ENCODE measurements at regions of chr3 and their contacts with region 1.

Region 1: GRCh38 chr3:36729204-36730056 is 34.9 kb downstream of the DCLK3 start:
- DNase-seq: peak in 1 of 2 experiments; percentile 44
- H3K4me3 ChIP-seq: no peak overlapping the region
- H3K27ac ChIP-seq: no peak overlapping the region
- H3K4me1 ChIP-seq: no peaks in the 10 kb centered on the region
- H3K27me3 ChIP-seq: 0 out of 2 replicates have a peak, but pooled peaks cover 4% of the 10 kb centered on the region
- CTCF ChIP-seq: peak; percentile 78

Region 2: DNA sequence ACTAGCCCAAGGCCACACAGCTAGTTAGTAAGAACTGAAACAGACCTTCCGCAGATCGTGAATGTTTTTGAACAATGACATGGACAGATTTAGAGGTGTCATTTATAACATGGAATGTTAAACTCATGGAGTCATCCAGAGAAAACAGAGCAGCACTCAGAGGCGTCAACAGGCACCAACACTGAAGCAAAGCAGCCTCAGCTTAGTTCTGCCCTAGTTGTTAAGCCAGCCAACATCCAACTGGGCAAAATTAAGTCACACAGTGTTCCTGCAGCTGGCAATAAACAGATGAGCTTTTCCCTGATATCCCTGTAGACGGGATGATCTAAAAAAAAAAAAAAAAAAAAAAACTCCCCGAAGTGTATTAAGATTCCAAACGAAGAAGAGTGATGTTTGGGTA is 21.3 kb after region 1 on chr3:
- CTCF ChIA-PET with region 1: no interaction called
- POLR2A ChIA-PET with region 1: interaction called, 10 read pairs
- intact Hi-C with region 1: no loop called
- DNase-seq: no peak
- H3K4me3 ChIP-seq: no peak overlapping the region
- H3K27ac ChIP-seq: no peak overlapping the region
- H3K4me1 ChIP-seq: no peaks in the 10 kb centered on the region
- H3K27me3 ChIP-seq: no peaks in the 10 kb centered on the region; the same call in 1 of the 2 replicates
- CTCF ChIP-seq: no peak

Region 3: DNA sequence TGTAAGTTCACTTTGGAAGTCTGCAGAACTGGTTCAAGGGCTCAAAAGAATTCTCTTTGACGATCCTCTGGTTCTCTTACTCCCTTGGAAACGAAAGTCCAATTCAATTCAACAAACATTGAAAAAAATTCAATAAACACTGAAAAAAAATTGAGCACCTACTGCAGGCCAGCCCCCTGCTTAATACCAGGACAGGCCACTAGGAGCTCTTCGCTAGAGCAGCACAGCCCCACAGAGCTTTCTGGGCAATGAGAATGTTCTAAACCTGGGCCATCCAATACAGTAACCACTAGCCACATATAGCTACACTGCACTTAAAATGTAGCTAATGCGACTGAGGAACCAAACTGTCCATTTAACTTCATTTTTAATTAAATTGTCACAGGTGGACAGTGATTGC is 85.3 kb after region 1 on chr3:
- CTCF ChIA-PET with region 1: no interaction called
- POLR2A ChIA-PET with region 1: no interaction called
- intact Hi-C with region 1: no loop called
- DNase-seq: no peak
- H3K4me3 ChIP-seq: no peak overlapping the region
- H3K27ac ChIP-seq: no peak overlapping the region
- H3K4me1 ChIP-seq: peaks cover 21% of the 10 kb centered on the region; the same call in 1 of the 2 replicates
- H3K27me3 ChIP-seq: no peaks in the 10 kb centered on the region
- CTCF ChIP-seq: peak; percentile 35; the same call in 1 of the 2 replicates

Region 4: GRCh38 chr3:36868614-36869436 is 139.4 kb after region 1 on chr3:
- CTCF ChIA-PET with region 1: interaction called, 3 read pairs
- POLR2A ChIA-PET with region 1: no interaction called
- intact Hi-C with region 1: loop called (anchors 1 kb)
- DNase-seq: peak; percentile 32 to 58
- H3K4me3 ChIP-seq: no peak overlapping the region
- H3K27ac ChIP-seq: no peak overlapping the region
- H3K4me1 ChIP-seq: no peaks in the 10 kb centered on the region
- H3K27me3 ChIP-seq: no peaks in the 10 kb centered on the region
- CTCF ChIP-seq: peak; percentile 79

Region 5: GRCh38 chr3:37210230-37210629 is 480.8 kb after region 1 on chr3:
- CTCF ChIA-PET with region 1: no interaction called
- POLR2A ChIA-PET with region 1: no interaction called
- intact Hi-C with region 1: loop called (anchors 1 kb)
- DNase-seq: no peak
- H3K4me3 ChIP-seq: no peak overlapping the region
- H3K27ac ChIP-seq: no peak overlapping the region
- H3K4me1 ChIP-seq: no peaks in the 10 kb centered on the region
- H3K27me3 ChIP-seq: no peaks in the 10 kb centered on the region
- CTCF ChIP-seq: no peak